ENCODE measurements at regions of chr21 and their contacts with region 1.

Region 1: DNA sequence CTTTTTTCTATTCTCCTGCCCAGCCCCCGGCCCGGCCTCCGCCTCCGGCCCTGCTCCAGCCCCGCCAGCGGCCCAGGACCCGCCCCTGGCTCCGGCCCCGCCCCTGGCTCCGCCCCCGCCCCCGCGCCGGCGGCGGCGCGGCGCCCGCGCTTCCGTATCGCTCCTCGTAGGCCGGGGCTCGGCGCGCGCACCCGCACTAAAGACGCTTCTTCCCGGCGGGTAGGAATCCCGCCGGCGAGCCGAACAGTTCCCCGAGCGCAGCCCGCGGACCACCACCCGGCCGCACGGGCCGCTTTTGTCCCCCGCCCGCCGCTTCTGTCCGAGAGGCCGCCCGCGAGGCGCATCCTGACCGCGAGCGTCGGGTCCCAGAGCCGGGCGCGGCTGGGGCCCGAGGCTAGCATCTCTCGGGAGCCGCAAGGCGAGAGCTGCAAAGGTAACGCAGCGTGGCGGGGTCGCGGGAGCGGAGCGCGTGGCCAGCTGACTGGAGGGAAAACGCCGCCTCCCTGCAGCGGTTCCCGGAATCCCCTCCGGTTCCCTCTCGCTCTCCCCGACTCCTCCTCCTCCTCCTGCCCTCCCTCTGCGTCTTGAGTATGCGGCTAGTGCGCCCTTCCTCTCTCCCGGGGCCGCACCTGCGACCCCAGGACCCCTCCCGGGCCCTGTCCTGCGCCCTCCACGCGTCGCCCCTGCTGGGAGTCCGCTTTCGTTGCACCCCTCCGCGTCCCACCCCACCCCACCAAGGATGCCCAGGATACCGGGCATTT is at the start of gene IFNAR2:
- DNase-seq: peak; percentile 55 to 82 (median 68)
- ATAC-seq: peak; percentile 93
- H3K4me3 ChIP-seq: peak within 1 kb of the TSS; percentile 83
- H3K4me3 Mint-ChIP-seq: peak within 1 kb of the TSS; percentile 88 to 97 (median 92)
- H3K27ac ChIP-seq: peak within 1 kb of the TSS; percentile 92
- H3K27ac Mint-ChIP-seq: peak within 1 kb of the TSS; percentile 83 to 98 (median 90)
- H3K4me1 ChIP-seq: peaks cover 22 to 40% of the 10 kb centered on the region in 2 donors
- H3K4me1 Mint-ChIP-seq: peaks cover 35 to 59% (median 51%) of the 10 kb centered on the region in 7 donors
- H3K27me3 ChIP-seq: no peaks in the 10 kb centered on the region
- H3K27me3 Mint-ChIP-seq: no peaks in the 10 kb centered on the region
- total RNA-seq, gene IFNAR2: 44.9 to 85.8 (median 60.8) TPM

Region 2: GRCh38 chr21:33205476-33205875 is 24.5 kb before region 1 on chr21:
- CTCF ChIA-PET with region 1: interaction called, 3 read pairs
- POLR2A ChIA-PET with region 1: interaction called, 4 read pairs
- intact Hi-C with region 1: loop called (anchors 1 kb)
- DNase-seq: no peak
- ATAC-seq: peak; percentile 65
- H3K4me3 ChIP-seq: peak overlapping the region; percentile 5
- H3K4me3 Mint-ChIP-seq: peak overlapping the region; percentile 5 to 83 (median 60)
- H3K27ac ChIP-seq: peak overlapping the region; percentile 12
- H3K27ac Mint-ChIP-seq: peak overlapping the region; percentile 21 to 90 (median 82)
- H3K4me1 ChIP-seq: peaks cover 21 to 33% of the 10 kb centered on the region in 2 donors
- H3K4me1 Mint-ChIP-seq: peaks cover 42 to 73% (median 59%) of the 10 kb centered on the region in 7 donors
- H3K27me3 ChIP-seq: no peaks in the 10 kb centered on the region
- H3K27me3 Mint-ChIP-seq: no peaks in the 10 kb centered on the region

Region 3: DNA sequence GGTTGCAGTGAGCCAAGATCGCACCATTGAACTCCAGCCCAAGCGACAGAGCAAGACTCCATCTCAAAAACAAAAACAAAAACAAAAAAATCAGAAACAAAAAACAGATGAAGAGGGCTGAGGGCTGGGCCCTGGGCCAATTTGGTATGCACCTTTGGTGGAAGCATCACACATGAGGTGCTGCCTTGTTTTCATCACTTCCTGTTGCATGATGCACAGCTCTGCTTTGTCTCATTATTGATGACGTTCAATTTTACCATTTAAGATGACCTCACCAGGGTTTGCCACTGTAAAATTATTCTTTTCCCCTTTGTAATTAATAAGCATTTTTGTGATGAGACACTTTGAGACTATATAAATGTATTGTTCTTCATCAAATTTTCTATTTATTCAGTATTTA is 10.0 kb before region 1 on chr21:
- CTCF ChIA-PET with region 1: no interaction called
- POLR2A ChIA-PET with region 1: interaction called, 4 read pairs
- intact Hi-C with region 1: loop called in 1 of 2 experiments (anchors 1 kb)
- DNase-seq: peak in 3 of 9 donors; percentile 28 to 45 (median 29)
- ATAC-seq: no peak
- H3K4me3 ChIP-seq: no peak overlapping the region
- H3K4me3 Mint-ChIP-seq: peak overlapping the region in 3 of 10 donors; percentile 19 to 34 (median 32)
- H3K27ac ChIP-seq: no peak overlapping the region
- H3K27ac Mint-ChIP-seq: peak overlapping the region in 5 of 9 donors; percentile 4 to 92 (median 68)
- H3K4me1 ChIP-seq: peaks cover 18 to 40% of the 10 kb centered on the region in 2 donors
- H3K4me1 Mint-ChIP-seq: peaks cover 45 to 62% (median 58%) of the 10 kb centered on the region in 7 donors
- H3K27me3 ChIP-seq: no peaks in the 10 kb centered on the region
- H3K27me3 Mint-ChIP-seq: peaks cover 0 to 9% (median 0%) of the 10 kb centered on the region in 5 donors

Region 4: DNA sequence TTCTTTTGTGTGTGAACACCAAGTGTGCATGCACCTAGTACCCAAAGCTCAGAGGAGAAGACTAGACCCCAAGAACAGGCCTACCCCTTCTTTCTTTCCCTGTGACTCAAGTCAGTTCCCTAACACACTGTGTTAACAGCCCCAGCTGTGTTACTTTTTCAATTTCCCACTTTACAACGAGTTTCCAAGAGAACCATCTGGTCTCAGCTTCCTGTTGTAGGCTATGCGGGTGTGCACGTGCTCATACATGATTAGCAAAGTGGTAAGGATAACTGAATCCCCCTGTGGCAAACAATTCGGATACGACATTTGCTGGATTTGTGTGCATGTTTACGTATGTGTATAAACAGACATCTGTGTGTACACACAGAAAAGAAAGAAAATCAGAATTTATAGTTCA is 17.6 kb after region 1 on chr21:
- CTCF ChIA-PET with region 1: interaction called, 3 read pairs
- POLR2A ChIA-PET with region 1: interaction called, 6 read pairs
- intact Hi-C with region 1: loop called in 1 of 2 experiments (anchors 1 kb)
- DNase-seq: no peak
- ATAC-seq: no peak
- H3K4me3 ChIP-seq: no peak overlapping the region
- H3K4me3 Mint-ChIP-seq: peak overlapping the region in 8 of 10 donors; percentile 12 to 65 (median 48)
- H3K27ac ChIP-seq: peak overlapping the region; percentile 52
- H3K27ac Mint-ChIP-seq: peak overlapping the region; percentile 47 to 94 (median 89)
- H3K4me1 ChIP-seq: peaks cover 17 to 60% of the 10 kb centered on the region in 2 donors
- H3K4me1 Mint-ChIP-seq: peaks cover 47 to 82% (median 77%) of the 10 kb centered on the region in 7 donors
- H3K27me3 ChIP-seq: no peaks in the 10 kb centered on the region
- H3K27me3 Mint-ChIP-seq: no peaks in the 10 kb centered on the region

Region 5: GRCh38 chr21:33299181-33299752 is 69.3 kb after region 1 on chr21:
- CTCF ChIA-PET with region 1: no interaction called
- POLR2A ChIA-PET with region 1: interaction called, 5 read pairs
- intact Hi-C with region 1: loop called in 1 of 2 experiments (anchors 2 kb)
- DNase-seq: peak in 7 of 9 donors; percentile 52 to 70 (median 62)
- ATAC-seq: peak; percentile 86
- H3K4me3 ChIP-seq: peak overlapping the region; percentile 33
- H3K4me3 Mint-ChIP-seq: peak overlapping the region; percentile 47 to 85 (median 72)
- H3K27ac ChIP-seq: peak overlapping the region; percentile 58
- H3K27ac Mint-ChIP-seq: peak overlapping the region; percentile 81 to 90 (median 85)
- H3K4me1 ChIP-seq: peaks cover 6 to 36% of the 10 kb centered on the region in 2 donors
- H3K4me1 Mint-ChIP-seq: peaks cover 36 to 77% (median 63%) of the 10 kb centered on the region in 7 donors
- H3K27me3 ChIP-seq: no peaks in the 10 kb centered on the region
- H3K27me3 Mint-ChIP-seq: no peaks in the 10 kb centered on the region

Region 6: DNA sequence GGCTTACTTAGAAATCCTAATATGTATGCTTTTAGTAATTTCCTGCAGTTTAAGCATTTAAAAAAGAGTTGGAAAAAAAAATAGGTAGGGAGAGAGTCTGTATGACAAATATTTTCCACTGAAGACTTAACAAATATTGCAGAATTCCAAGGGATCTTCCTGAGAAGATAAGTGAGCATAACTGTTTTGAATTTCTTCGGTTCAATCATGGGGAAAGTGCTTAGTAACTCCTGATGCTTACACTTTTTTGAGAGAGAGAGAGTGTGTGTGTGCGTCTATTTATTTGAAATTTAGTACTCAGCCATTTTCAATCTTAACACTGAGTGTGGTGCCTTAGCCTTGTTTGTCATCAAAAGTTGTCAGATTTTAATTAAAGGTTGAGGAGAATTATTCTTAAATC is 331.4 kb after region 1 on chr21:
- CTCF ChIA-PET with region 1: no interaction called
- POLR2A ChIA-PET with region 1: no interaction called
- intact Hi-C with region 1: no loop called
- DNase-seq: no peak
- ATAC-seq: no peak
- H3K4me3 ChIP-seq: no peak overlapping the region
- H3K4me3 Mint-ChIP-seq: peak overlapping the region in 1 of 10 donors; percentile 17
- H3K27ac ChIP-seq: no peak overlapping the region
- H3K27ac Mint-ChIP-seq: peak overlapping the region in 7 of 9 donors; percentile 9 to 52 (median 37)
- H3K4me1 ChIP-seq: peaks cover under 1 to 10% of the 10 kb centered on the region in 2 donors
- H3K4me1 Mint-ChIP-seq: peaks cover 23 to 76% (median 66%) of the 10 kb centered on the region in 7 donors
- H3K27me3 ChIP-seq: no peaks in the 10 kb centered on the region
- H3K27me3 Mint-ChIP-seq: no peaks in the 10 kb centered on the region